Activated B cell treated with CpG ODN at 0.5 μM for 24 hours (primary cell): ENCODE measurements at regions of chr11 and their contacts with region 1.

Region 1: GRCh38 chr11:117098269-117099232 is at the start of gene SIK3:
- DNase-seq: peak; percentile 96
- ATAC-seq: peak; percentile 74
- H3K4me3 Mint-ChIP-seq: peak within 1 kb of the TSS; percentile 95
- H3K27ac Mint-ChIP-seq: peak within 1 kb of the TSS; percentile 97
- H3K4me1 Mint-ChIP-seq: peaks cover 55% of the 10 kb centered on the region
- H3K27me3 Mint-ChIP-seq: no peaks in the 10 kb centered on the region
- CTCF ChIP-seq: no peak
- total RNA-seq, gene SIK3: 75.0 and 88.4 TPM in 2 replicates

Region 2: DNA sequence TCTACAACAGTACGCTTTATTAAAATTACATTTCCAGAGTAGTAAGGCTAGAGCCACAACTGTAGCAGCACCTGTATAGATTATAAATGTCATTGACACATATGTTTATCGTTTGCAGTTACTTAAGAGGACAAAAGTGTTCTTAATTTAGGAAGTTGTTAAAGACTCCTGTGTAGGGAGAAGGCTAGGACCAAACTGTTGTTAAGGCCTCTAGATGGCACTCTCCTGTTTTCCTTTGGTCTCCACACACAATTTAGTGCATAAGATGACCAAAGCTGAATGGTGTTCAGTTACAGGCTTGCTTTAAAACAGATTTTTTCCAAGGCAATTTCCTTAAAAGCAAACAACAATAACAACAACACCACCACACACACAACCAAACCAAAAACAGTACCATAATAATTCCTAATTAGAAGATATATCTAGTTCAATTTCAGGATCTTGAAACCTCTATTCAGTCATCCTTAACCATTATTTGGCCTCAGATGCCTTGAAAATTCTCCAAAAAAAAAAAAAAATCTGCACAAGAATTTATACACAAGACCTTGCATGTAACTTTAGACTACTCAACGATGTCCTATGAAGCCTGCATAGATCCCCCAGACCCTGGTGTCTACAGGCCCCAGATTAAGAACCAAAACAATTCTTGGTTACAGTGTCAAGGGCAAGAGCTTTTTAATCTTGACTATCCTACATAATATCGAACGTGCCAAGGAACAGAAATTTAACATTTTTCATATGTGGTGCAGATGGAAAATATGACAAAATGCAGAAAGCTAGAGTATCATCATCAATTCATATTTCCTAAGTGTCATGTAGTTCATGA is 218.5 kb before region 1 on chr11:
- CTCF ChIA-PET with region 1: interaction called, 71 read pairs
- POLR2A ChIA-PET with region 1: interaction called, 6 read pairs
- intact Hi-C with region 1: loop called (anchors 2 kb)
- DNase-seq: no peak
- ATAC-seq: peak; percentile 72
- H3K4me3 Mint-ChIP-seq: no peak overlapping the region
- H3K27ac Mint-ChIP-seq: no peak overlapping the region
- H3K4me1 Mint-ChIP-seq: peaks cover 9% of the 10 kb centered on the region
- H3K27me3 Mint-ChIP-seq: no peaks in the 10 kb centered on the region
- CTCF ChIP-seq: no peak

Region 3: GRCh38 chr11:116980136-116980793 is 118.3 kb before region 1 on chr11:
- CTCF ChIA-PET with region 1: no interaction called
- POLR2A ChIA-PET with region 1: interaction called, 11 read pairs
- intact Hi-C with region 1: loop called (anchors 1 kb)
- DNase-seq: no peak
- ATAC-seq: peak; percentile 96
- H3K4me3 Mint-ChIP-seq: peak overlapping the region; percentile 81
- H3K27ac Mint-ChIP-seq: peak overlapping the region; percentile 94
- H3K4me1 Mint-ChIP-seq: peaks cover 77% of the 10 kb centered on the region
- H3K27me3 Mint-ChIP-seq: no peaks in the 10 kb centered on the region
- CTCF ChIP-seq: no peak

Region 4: DNA sequence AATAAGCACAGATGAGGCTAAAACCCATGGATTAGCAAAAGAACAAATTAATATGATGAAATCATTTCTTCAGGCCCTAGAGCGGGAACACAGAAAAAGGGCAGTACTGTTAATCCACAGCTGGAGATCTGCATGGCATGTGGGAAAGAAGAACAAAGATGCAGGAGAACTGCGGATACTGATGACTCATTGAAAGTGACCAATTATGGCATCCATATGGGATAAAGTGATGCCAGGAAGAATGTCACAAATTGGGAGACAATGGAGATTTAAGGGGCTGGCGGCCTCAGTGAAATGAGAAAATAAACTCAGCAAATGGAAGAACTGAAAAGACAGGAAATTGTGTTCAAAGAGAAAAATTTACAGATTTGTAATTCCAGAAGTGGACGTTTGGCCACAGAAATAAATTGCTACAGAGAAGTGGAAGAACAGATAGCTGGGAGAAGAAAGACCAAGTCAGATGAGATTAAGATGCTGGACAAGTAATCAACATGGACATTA is 39.7 kb before region 1 on chr11:
- CTCF ChIA-PET with region 1: no interaction called
- POLR2A ChIA-PET with region 1: interaction called, 18 read pairs
- intact Hi-C with region 1: loop called (anchors 1 kb)
- DNase-seq: no peak
- ATAC-seq: no peak
- H3K4me3 Mint-ChIP-seq: no peak overlapping the region
- H3K27ac Mint-ChIP-seq: peak overlapping the region; percentile 9
- H3K4me1 Mint-ChIP-seq: peaks cover 76% of the 10 kb centered on the region
- H3K27me3 Mint-ChIP-seq: no peaks in the 10 kb centered on the region
- CTCF ChIP-seq: no peak

Region 5: DNA sequence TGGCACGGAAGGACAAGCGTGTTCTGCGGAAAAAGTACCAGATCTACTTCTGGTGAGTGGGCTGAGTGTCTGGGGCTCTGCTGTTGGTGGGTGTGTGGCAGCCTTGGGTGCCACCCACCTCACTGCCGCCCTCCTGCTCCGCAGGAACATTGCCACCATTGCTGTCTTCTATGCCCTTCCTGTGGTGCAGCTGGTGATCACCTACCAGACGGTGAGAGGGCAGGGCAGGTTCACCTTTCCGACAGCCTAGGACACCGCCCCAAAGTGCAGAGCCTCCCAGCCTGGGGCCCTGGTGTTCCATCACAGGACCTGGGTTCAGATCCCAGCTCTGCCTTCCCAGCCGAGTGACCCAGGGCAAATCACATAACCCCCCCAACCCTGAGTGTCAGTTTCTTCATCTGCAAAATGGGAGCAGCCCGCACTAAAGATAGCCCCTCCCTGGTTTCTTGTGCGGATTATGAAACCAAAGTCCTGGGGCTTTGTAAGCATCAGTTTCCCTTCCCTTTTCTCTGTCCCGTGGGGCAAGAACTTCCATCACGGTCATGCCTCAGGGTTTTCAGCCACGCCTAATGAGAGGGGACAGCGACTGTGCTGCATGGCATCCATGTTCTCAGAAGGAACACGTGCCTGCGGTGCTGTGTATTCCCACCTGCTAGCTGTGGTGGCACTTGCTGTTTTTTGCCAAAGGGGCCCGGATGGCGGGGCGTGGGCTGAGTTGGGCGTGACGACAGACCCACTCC is 90.8 kb after region 1 on chr11:
- CTCF ChIA-PET with region 1: no interaction called
- POLR2A ChIA-PET with region 1: no interaction called
- intact Hi-C with region 1: loop called (anchors 1 kb)
- DNase-seq: peak; percentile 66
- ATAC-seq: peak; percentile 87
- H3K4me3 Mint-ChIP-seq: peak overlapping the region; percentile 74
- H3K27ac Mint-ChIP-seq: peak overlapping the region; percentile 94
- H3K4me1 Mint-ChIP-seq: peaks cover 78% of the 10 kb centered on the region
- H3K27me3 Mint-ChIP-seq: no peaks in the 10 kb centered on the region
- CTCF ChIP-seq: no peak